Sciatic nerve (tissue), 2 donors: ENCODE measurements at regions of chr2 and their contacts with region 1.

Region 1: DNA sequence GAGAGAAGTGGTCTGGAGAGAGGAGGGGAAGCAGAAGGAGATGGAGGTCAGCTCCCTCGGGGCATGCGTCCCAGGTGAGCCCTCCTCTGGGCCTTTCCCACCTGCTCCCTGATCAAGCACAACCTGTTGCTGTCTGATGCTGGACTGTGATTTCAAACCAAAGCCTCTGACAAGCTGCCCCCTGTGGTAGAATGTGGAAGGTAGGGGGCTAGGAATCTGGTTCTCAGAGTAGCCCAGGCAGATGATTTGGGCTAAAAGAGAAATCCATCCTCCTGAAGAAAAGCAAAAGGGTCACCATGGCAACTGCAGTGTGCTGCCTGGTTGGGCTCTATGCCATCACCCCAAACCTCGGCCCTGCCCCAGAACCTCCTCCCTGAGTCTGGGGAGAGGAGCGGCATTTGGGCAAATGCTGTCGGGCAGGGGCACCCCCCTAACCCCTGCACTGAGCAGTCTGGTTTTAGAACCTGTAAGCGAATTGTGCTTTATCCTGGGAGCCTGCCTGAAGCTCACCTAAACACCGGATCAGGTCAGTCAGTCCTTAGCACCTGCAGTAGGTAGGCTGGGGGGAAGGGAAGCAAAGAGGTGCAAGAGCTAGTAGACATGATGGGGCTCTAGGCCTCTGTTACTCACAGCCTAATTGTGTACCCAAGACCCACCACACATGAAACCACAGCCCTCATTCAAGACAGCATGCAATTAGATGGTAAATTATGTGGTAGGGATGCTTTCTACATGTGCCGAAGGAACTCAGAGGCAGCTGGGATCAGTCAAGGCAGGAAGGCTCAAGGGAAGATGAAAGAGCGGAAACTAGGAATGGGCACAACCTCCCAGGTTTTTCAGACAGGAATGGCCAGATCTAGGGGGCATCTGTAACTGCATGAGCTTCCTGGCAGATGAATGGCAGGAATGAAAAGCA is 83.5 kb downstream of the DNMT3A start:
- DNase-seq: no peak
- ATAC-seq: no peak

Region 2: GRCh38 chr2:25340181-25340886 is 82.1 kb after region 1 on chr2:
- intact Hi-C with region 1: loop called (anchors 1 kb)
- DNase-seq: no peak
- ATAC-seq: peak; percentile 6